ENCODE measurements at regions of chr19 and their contacts with region 1.

Region 1: DNA sequence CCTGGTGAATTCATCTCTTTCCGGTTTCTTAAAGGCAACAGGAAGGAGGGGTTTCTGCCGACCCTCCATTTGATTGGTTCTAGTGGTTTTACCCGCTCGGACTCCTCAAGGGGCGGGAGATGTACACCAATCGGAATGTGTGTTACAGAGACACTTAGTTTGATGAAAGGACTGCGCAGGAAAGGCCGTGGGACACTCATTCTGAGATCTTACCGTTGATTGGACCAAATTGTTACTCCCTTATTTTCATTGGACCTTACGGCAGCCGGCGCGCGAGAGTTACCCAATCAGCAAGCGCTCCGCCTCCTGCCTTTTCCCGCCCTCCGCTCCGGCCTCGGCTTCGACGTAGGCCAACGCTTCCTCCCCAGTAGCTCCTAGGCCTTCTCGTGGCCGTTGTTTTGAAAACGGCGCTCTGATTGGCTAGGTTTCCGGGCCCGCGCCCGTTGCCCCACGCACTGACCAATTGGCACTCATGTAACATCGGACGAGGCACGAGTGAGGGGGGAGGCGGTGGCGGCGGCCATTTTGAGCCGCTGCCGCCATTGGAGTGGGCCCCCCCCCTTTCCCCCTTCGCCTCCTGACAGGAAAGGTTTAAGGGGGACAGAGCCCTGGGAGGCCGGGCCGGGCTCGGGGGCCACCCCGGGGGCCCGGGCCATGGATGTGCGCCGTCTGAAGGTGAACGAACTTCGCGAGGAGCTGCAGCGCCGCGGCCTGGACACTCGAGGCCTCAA is at the start of gene HNRNPUL1:
- DNase-seq: peak; percentile 100
- H3K4me3 ChIP-seq: peak within 1 kb of the TSS; percentile 84 to 100 (median 92)
- H3K27ac ChIP-seq: peak within 1 kb of the TSS; percentile 98 to 100 (median 100)
- H3K4me1 ChIP-seq: peaks cover 0 to 40% (median 33%) of the 10 kb centered on the region in 4 donors
- H3K27me3 ChIP-seq: no peaks in the 10 kb centered on the region
- CTCF ChIP-seq: peak in 2 of 4 experiments; percentile 8 to 23
- EP300 ChIP-seq: no peak
- POLR2A ChIP-seq: no peak
- total RNA-seq, gene HNRNPUL1: 120 to 153 (median 130) TPM

Region 2: GRCh38 chr19:41186971-41187883 is 76.8 kb before region 1 on chr19:
- intact Hi-C with region 1: no loop called
- DNase-seq: no peak
- H3K4me3 ChIP-seq: no peak overlapping the region
- H3K27ac ChIP-seq: peak overlapping the region in 1 of 4 donors; percentile 17
- H3K4me1 ChIP-seq: peaks cover 0 to 5% (median 2%) of the 10 kb centered on the region in 4 donors
- H3K27me3 ChIP-seq: peaks cover 0 to 30% (median 5%) of the 10 kb centered on the region in 3 donors
- CTCF ChIP-seq: no peak
- EP300 ChIP-seq: no peak
- POLR2A ChIP-seq: no peak

Region 3: DNA sequence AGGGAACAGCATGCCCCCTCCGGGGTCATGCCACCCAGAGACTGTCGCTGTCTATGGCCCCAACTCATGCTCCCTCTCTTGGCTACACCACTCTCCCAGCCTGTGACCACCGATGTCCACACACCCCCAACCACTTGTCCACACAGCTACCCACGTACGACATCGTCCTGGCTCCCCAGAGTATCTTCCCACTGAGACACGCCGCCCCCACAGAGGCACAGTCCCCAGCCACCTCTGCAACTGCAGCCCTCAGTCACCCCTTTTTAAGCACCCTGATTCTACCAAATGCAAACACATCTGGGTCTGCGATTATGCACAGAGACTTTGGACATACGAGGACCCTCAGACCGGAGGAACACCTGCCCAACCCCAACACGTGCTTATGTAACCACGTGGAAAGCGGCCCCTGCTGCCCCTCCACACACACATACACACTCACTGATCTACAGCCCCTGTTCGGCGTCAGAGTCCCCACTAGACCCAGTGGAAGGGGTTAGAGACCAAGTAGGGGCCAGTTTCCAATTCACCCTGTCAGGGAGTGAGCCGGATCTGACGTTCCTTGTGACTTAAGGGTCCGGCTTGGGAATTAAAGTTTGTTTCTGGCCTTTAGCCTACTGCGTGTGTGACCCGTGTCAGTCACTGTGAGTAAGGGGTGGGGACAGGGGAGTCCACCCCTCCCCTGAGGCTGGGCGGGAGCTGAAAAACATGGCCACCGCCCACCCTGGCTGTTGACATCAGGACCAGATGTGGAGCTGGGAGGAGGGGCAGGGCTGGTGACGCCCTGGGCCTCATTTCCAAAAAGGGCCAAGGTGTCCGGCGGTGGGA is 56.9 kb before region 1 on chr19:
- intact Hi-C with region 1: loop called (anchors 1 kb)
- DNase-seq: peak; percentile 90
- H3K4me3 ChIP-seq: peak overlapping the region in 1 of 4 donors; percentile 5
- H3K27ac ChIP-seq: peak overlapping the region; percentile 46 to 59 (median 54)
- H3K4me1 ChIP-seq: peaks cover 0 to 7% (median 0%) of the 10 kb centered on the region in 4 donors
- H3K27me3 ChIP-seq: no peaks in the 10 kb centered on the region
- CTCF ChIP-seq: no peak
- EP300 ChIP-seq: no peak
- POLR2A ChIP-seq: no peak

Region 4: GRCh38 chr19:41218615-41219507 is 45.2 kb before region 1 on chr19 and contains the start of gene AXL:
- intact Hi-C with region 1: loop called (anchors 1 kb)
- DNase-seq: peak; percentile 95
- H3K4me3 ChIP-seq: peak within 1 kb of the TSS; percentile 64 to 86 (median 74)
- H3K27ac ChIP-seq: peak within 1 kb of the TSS; percentile 91 to 98 (median 94)
- H3K4me1 ChIP-seq: peaks cover 0 to 44% (median 40%) of the 10 kb centered on the region in 4 donors
- H3K27me3 ChIP-seq: no peaks in the 10 kb centered on the region
- CTCF ChIP-seq: no peak
- EP300 ChIP-seq: peak in 1 of 4 donors; percentile 69
- POLR2A ChIP-seq: peak; percentile 67 to 70
- total RNA-seq, gene AXL: 85.9 to 108 (median 95.4) TPM

Region 5: GRCh38 chr19:41226053-41226873 is 37.8 kb before region 1 on chr19:
- intact Hi-C with region 1: loop called (anchors 2 kb)
- DNase-seq: peak; percentile 90
- H3K4me3 ChIP-seq: peak overlapping the region; percentile 37 to 59 (median 52)
- H3K27ac ChIP-seq: peak overlapping the region; percentile 92 to 98 (median 96)
- H3K4me1 ChIP-seq: peaks cover 0 to 68% (median 48%) of the 10 kb centered on the region in 4 donors
- H3K27me3 ChIP-seq: no peaks in the 10 kb centered on the region
- CTCF ChIP-seq: peak in 1 of 4 experiments; percentile 19
- EP300 ChIP-seq: peak in 1 of 4 donors; percentile 27
- POLR2A ChIP-seq: no peak

Region 6: DNA sequence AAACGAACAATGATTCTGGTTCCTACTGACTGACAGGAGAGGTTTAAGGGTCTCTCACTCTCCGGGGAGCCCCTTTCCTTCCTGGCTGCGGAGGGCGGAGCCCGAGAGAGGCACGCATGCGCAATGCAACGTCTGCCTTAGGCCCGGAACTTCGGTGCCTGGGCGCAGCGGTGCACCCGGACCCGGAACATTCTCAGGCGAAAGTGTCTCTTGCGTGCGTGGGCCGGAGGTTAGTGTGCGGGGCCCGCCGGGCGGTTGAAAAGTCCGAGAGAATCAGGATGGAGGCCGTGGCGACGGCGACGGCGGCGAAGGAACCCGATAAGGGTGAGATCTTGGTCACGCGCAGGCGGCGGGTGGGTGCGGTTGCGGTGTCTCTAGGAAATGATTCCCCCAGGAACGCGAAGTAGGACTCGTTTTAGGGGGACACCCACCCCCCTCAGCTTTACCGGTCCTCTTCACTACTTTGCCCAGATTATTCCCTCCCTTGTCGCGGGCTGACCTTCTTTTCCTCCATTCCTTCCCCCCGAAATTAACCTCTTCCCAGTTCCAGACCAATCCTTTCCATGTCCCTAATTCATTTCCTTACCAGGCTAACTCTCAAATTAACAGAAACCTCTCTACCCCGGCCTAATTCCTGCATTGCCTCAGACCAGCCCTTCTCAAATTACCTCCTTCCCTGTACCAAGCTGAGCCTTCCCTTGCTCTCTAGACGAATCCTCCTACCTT is 46.2 kb after region 1 on chr19 and contains the start of gene CCDC97:
- intact Hi-C with region 1: loop called (anchors 1 kb)
- DNase-seq: peak; percentile 92
- H3K4me3 ChIP-seq: peak within 1 kb of the TSS; percentile 61 to 83 (median 68)
- H3K27ac ChIP-seq: peak within 1 kb of the TSS; percentile 88 to 96 (median 95)
- H3K4me1 ChIP-seq: peaks cover 0 to 41% (median 36%) of the 10 kb centered on the region in 4 donors
- H3K27me3 ChIP-seq: no peaks in the 10 kb centered on the region
- CTCF ChIP-seq: no peak
- EP300 ChIP-seq: peak in 2 of 4 donors; percentile 21 to 26
- POLR2A ChIP-seq: peak; percentile 58 to 78
- total RNA-seq, gene CCDC97: 8.7 to 16.6 (median 9.2) TPM

Region 7: DNA sequence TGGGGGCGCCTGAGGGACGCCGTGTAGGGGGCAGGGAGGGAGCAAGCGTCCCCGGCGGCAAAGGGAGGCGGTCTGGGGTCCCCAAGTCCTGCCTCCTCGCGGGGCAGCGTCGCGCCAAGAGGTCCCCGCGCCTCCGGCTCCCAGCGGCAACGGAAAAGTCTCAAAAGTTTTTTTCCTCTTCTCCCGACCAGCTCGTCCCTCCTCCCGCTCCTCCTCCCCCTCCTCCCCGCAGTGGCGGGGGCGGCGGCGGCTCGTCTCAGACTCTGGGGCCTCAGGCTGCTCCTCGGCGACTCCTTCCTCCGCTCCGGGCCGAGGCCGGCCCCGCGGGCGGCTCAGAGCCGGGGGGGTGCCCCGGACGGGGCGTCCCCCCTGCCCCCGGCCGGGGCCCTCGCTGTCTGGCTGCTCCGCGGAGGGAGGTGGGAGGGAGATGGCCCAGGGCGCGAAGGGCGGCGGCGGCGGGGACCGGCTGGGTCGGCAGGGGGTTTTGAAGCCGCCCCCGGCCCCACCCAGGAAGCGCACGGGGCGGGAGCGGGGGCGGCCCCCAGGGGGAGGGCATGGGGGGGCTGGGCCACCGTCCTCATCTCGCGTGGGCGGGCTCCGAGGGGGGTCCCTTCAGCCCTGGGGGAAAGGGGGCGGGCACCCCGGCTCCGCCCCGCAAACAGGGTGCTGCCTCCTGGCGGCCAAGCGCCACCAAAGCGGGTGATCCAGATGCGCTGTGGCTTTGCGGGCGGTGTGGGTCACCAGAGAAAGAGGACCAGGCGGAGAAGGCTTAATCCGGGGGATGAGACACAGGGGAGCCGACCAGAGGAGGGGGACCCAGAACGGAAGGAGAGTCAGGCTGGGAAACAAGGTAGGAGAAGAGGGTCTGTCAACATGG is 89.7 kb after region 1 on chr19 and contains the start of gene TGFB1:
- intact Hi-C with region 1: loop called (anchors 5 kb)
- DNase-seq: peak; percentile 96
- H3K4me3 ChIP-seq: peak within 1 kb of the TSS; percentile 74 to 85 (median 77)
- H3K27ac ChIP-seq: peak within 1 kb of the TSS; percentile 87 to 95 (median 94)
- H3K4me1 ChIP-seq: peaks cover 0 to 34% (median 24%) of the 10 kb centered on the region in 4 donors
- H3K27me3 ChIP-seq: no peaks in the 10 kb centered on the region
- CTCF ChIP-seq: peak; percentile 85 to 88 (median 86)
- EP300 ChIP-seq: no peak
- POLR2A ChIP-seq: no peak
- total RNA-seq, gene TGFB1: 16.4 to 27.1 (median 18.1) TPM